Activated naive CD4-positive, alpha-beta T cell treated with anti-CD3 and anti-CD28 coated beads for 36 hours (primary cell): ENCODE measurements at regions of chr3 and their contacts with region 1.

Region 1: GRCh38 chr3:47781685-47782445 is at the start of gene SMARCC1:
- DNase-seq: peak; percentile 99
- H3K4me3 Mint-ChIP-seq: peak within 1 kb of the TSS; percentile 95
- H3K27ac Mint-ChIP-seq: peak within 1 kb of the TSS; percentile 92
- H3K4me1 Mint-ChIP-seq: peaks cover 21% of the 10 kb centered on the region
- H3K27me3 Mint-ChIP-seq: no peaks in the 10 kb centered on the region
- total RNA-seq, gene SMARCC1: 82.5 to 84.5 TPM

Region 2: DNA sequence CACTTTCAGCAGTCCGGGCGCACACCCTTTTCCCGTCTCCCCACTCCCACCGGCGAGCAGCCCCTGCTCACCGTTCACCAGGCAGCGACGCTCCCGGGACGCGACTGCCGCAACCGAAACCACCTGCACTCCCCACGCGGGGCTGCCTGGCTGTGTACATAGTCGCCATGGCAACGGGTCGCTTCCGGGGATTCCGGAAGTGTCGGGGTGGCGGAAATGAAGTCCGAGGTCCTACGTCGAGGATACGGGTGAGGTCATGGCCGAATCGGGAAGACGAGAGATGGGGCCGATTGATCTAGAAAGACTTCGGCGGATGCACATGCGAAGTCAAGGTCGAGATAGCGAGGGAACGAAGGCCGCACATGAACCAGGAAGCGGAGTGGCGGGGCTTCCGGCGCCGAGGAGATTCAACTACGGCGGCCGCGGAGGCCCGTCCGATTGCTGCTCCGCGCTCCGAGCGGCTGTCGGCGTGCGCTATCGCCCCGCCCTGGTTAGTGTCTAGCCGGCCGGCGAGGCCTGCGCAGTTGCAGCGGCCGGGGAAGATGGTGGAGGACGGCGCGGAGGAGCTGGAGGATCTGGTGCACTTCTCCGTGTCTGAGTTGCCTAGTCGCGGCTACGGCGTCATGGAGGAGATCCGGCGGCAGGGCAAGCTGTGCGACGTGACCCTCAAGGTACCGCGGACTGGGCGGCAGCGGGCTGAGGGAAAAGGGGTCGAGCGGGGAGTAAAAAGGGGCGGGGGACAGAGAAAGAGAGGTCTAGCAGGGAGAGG is 499.3 kb before region 1 on chr3 and contains the starts of genes KIF9 and KLHL18:
- CTCF ChIA-PET with region 1: no interaction called
- intact Hi-C with region 1: loop called (anchors 10 kb)
- DNase-seq: peak; percentile 95
- H3K4me3 Mint-ChIP-seq: peak within 1 kb of the TSS; percentile 99
- H3K27ac Mint-ChIP-seq: peak within 1 kb of the TSS; percentile 99
- H3K4me1 Mint-ChIP-seq: peaks cover 42% of the 10 kb centered on the region
- H3K27me3 Mint-ChIP-seq: no peaks in the 10 kb centered on the region
- total RNA-seq, gene KIF9: 4.5 to 4.9 TPM
- total RNA-seq, gene KLHL18: 20.7 to 21.6 TPM

Region 3: DNA sequence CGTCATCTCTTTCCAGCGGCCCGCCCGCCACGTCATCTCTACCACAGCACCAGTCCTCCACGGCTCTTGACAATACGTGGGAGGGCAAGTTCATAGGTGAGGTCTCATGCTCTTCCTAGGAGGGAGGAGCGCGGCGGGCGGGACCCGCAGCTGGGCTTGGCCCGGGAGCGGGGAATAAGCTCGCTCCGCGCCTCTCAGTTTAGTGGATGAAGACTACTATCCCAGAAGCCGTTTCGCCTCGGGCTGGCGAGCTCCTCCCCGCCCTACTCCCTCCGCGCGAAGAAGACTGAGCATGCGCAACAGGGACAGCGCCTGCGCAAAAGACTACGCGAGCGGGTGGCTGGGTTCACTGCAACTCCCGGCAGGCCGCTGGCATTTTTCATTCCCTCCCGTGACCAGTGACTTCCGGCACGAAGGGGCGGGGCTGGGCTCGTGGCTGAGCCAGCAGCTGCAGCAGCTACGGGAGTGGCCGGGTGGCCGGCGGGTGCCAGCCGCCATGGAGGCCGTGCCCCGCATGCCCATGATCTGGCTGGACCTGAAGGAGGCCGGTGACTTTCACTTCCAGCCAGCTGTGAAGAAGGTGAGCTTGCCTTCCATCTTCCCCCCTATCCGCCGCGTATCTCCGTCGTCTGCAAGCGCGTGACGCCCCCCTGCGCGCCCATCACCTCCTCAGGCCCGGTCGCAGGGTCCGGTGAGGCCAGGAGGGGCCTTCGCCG is 401.1 kb before region 1 on chr3 and contains the start of gene PTPN23:
- CTCF ChIA-PET with region 1: no interaction called
- intact Hi-C with region 1: loop called (anchors 1 kb)
- DNase-seq: peak; percentile 99
- H3K4me3 Mint-ChIP-seq: peak within 1 kb of the TSS; percentile 100
- H3K27ac Mint-ChIP-seq: peak within 1 kb of the TSS; percentile 98
- H3K4me1 Mint-ChIP-seq: peaks cover 37% of the 10 kb centered on the region
- H3K27me3 Mint-ChIP-seq: no peaks in the 10 kb centered on the region
- total RNA-seq, gene PTPN23: 18.7 to 21.6 TPM

Region 4: DNA sequence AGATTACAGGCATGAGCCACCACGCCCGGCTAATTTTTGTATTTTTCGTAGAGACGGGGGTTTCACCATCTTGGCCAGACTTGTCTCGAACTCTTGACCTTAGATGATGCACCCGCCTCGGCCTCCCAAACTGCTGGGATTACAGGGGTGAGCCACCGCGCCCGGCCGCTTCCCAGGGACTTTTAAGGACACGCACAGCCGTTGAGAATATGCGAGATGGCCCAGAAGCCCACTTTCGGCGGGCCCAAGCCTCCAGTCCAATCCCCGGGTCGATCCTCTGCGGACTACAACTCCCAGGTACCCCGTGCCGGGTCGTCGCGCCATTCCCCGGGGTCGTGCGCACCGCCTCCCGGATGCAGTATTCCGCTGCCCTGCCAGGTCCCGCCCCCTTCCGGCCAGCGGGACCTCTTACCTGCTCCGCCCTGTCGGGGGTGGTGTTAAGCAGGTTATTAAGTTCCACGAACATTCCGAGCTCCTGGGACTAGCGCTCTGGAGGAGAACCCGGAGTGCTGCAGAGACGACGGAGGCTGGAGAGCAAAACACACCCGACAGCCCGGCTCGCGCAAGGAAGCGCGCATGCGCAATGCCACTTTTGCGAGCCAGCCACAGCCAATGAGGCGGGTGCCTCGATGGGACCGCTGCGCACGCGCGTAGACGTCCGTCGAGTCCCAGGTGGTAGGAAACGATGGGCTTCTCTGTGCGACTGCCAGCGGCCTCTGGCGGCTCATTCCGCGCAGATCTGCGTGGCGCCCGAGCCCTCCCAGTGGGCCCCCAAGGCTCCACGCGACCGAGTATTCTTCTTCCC is 268.5 kb before region 1 on chr3 and contains the start of gene ELP6:
- CTCF ChIA-PET with region 1: no interaction called
- intact Hi-C with region 1: loop called (anchors 2 kb)
- DNase-seq: peak; percentile 98
- H3K4me3 Mint-ChIP-seq: peak within 1 kb of the TSS; percentile 96
- H3K27ac Mint-ChIP-seq: peak within 1 kb of the TSS; percentile 97
- H3K4me1 Mint-ChIP-seq: peaks cover 15% of the 10 kb centered on the region
- H3K27me3 Mint-ChIP-seq: no peaks in the 10 kb centered on the region
- total RNA-seq, gene ELP6: 32.7 to 33.1 TPM

Region 5: GRCh38 chr3:47802734-47803477 is 21.0 kb after region 1 on chr3 and contains the start of gene DHX30:
- CTCF ChIA-PET with region 1: no interaction called
- intact Hi-C with region 1: loop called (anchors 1 kb)
- DNase-seq: peak; percentile 87
- H3K4me3 Mint-ChIP-seq: peak within 1 kb of the TSS; percentile 96
- H3K27ac Mint-ChIP-seq: peak within 1 kb of the TSS; percentile 92
- H3K4me1 Mint-ChIP-seq: peaks cover 21% of the 10 kb centered on the region
- H3K27me3 Mint-ChIP-seq: no peaks in the 10 kb centered on the region
- total RNA-seq, gene DHX30: 65.6 to 69.9 TPM